T-cell (primary cell): ENCODE measurements at regions of chr7 and their contacts with region 1.

Region 1: DNA sequence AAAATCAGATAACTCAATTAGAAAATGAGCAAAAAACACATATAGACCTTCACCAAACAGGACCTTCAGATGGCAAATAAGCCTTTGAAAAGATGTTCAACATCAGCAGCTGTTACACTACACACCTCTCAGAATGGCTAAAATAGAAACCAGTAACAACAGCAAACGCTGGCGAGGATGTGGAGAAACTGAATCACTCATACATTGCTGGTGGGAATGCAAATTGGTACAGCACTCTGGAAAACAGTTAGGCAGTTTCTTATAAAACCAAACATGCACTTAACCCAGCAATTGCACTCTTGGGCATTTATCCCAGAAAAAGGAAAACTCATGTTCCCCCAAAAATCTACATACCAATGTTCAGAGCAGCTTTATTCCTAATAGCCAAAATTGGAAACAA is 37.7 kb upstream of the SMARCD3 start:
- DNase-seq: no peak
- ATAC-seq: no peak
- H3K4me3 ChIP-seq: no peak overlapping the region
- H3K4me3 Mint-ChIP-seq: no peak overlapping the region
- H3K27ac ChIP-seq: no peak overlapping the region
- H3K27ac Mint-ChIP-seq: no peak overlapping the region
- H3K4me1 ChIP-seq: peaks cover 0 to 2% of the 10 kb centered on the region in 2 experiments
- H3K4me1 Mint-ChIP-seq: no peaks in the 10 kb centered on the region
- H3K27me3 ChIP-seq: peaks cover 2 to 13% of the 10 kb centered on the region in 2 experiments
- H3K27me3 Mint-ChIP-seq: peaks cover 8 to 12% of the 10 kb centered on the region in 2 donors

Region 2: DNA sequence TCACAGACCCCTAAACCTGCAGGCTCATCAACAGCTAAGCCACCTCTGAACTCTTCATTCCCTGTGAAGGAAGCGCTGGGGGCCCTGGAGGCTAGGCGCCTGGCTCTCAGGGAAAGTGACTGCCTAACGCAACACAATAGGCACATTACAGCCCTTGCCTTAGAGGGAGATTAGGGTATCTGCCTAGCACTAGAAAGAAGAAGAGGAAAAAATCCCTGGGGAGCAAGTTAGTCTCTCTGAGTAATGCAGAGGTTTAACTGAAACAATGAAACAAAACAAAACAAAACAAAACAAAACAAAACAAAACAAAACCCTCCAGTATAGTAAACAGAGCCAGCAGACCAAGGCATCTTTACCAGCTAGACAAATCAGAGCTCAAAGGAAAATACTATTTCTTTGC is 1827.9 kb before region 1 on chr7:
- CTCF ChIA-PET with region 1: interaction called in 1 of 2 experiments, 10 read pairs
- POLR2A ChIA-PET with region 1: no interaction called
- DNase-seq: no peak
- ATAC-seq: no peak
- H3K4me3 ChIP-seq: no peak overlapping the region
- H3K4me3 Mint-ChIP-seq: peak overlapping the region; percentile 74 to 83 (median 75)
- H3K27ac ChIP-seq: no peak overlapping the region
- H3K27ac Mint-ChIP-seq: peak overlapping the region in 1 of 2 donors; percentile 48
- H3K4me1 ChIP-seq: peaks cover 6 to 24% of the 10 kb centered on the region in 2 experiments
- H3K4me1 Mint-ChIP-seq: peaks cover 31 to 36% (median 32%) of the 10 kb centered on the region in 3 donors
- H3K27me3 ChIP-seq: no peaks in the 10 kb centered on the region
- H3K27me3 Mint-ChIP-seq: no peaks in the 10 kb centered on the region

Region 3: DNA sequence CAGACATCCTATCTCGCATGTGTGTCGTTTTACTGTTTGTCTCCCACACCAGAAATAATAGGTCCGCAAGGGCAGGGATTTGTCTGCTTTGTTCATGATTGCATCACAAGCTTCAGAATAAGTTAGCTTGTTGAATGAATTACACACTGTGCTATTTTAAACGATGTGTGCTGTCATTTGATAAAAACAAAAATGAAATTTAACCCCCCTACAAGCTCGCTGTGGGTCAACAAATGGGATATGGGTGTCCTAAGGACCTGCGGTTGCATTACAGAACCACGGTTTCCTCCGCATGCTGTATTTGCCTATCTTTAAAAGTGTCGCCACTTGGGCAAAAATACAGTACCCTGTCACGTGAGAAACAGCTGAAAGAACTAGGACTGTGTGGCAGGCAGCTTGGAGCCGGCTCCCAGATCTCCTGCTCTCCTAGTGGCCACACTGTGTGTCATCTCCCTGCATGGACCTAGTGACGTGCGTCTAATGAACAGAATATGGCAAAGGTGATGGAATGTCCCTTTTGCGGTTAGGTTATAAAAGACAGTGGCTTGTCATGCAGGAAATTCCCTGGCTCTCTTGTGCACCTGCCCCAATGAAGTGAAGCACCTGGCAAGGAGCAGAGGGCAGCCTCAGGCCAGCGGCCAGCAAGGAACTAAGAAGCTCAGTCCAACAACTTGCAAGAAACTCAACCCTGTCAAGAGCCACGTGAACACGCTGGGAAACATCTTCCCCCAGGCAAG is 186.7 kb after region 1 on chr7:
- CTCF ChIA-PET with region 1: no interaction called
- POLR2A ChIA-PET with region 1: no interaction called
- DNase-seq: peak in 1 of 35 experiments; percentile 16
- ATAC-seq: peak in 1 of 4 experiments; percentile 26
- H3K4me3 ChIP-seq: no peak overlapping the region
- H3K4me3 Mint-ChIP-seq: peak overlapping the region in 1 of 3 donors; percentile 8
- H3K27ac ChIP-seq: no peak overlapping the region
- H3K27ac Mint-ChIP-seq: peak overlapping the region in 1 of 2 donors; percentile 71
- H3K4me1 ChIP-seq: peaks cover 0 to 25% of the 10 kb centered on the region in 2 experiments
- H3K4me1 Mint-ChIP-seq: peaks cover 40 to 55% (median 52%) of the 10 kb centered on the region in 3 donors
- H3K27me3 ChIP-seq: no peaks in the 10 kb centered on the region
- H3K27me3 Mint-ChIP-seq: no peaks in the 10 kb centered on the region